ENCODE measurements at regions of chr12 and their contacts with region 1.

Region 1: DNA sequence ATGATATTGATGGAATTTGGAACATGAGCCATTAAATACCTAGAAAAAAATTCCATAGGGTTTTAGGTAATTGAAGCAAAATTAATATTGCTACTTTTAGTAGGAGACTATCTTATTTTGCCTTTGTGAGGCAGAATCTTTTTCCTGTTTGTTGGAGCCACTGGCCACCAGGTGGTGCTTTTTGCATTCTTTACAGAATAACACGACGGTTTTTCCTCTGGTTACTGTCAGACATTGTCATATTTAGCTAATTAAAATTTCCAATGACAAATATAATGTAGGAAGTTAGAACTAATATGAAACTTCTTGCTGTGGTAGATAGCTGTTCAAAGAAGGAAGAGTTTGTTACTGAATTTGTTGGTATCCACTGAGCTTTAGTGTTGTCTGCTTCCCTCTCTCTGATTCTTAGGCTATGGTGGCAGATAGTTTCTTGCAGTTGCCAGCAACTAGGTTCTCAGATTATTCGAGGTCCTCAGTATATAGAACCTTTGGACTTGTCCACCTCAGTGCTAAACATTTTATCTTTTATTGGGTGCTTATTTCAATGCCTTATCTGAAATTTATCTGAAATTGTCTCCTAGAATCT is 25.7 kb downstream of the RAB21 start:
- DNase-seq: peak; percentile 25 to 57 (median 40)
- H3K4me3 ChIP-seq: no peak overlapping the region
- H3K4me3 Mint-ChIP-seq: no peak overlapping the region
- H3K27ac ChIP-seq: no peak overlapping the region
- H3K27ac Mint-ChIP-seq: peak overlapping the region; percentile 17 to 84 (median 45)
- H3K4me1 ChIP-seq: no peaks in the 10 kb centered on the region
- H3K4me1 Mint-ChIP-seq: peaks cover 6 to 10% (median 8%) of the 10 kb centered on the region in 4 donors
- H3K27me3 ChIP-seq: no peaks in the 10 kb centered on the region
- H3K27me3 Mint-ChIP-seq: no peaks in the 10 kb centered on the region

Region 2: GRCh38 chr12:71795901-71796300 is 15.6 kb after region 1 on chr12:
- CTCF ChIA-PET with region 1: interaction called, 13 read pairs
- POLR2A ChIA-PET with region 1: no interaction called
- intact Hi-C with region 1: no loop called
- DNase-seq: no peak
- H3K4me3 ChIP-seq: no peak overlapping the region
- H3K4me3 Mint-ChIP-seq: no peak overlapping the region
- H3K27ac ChIP-seq: no peak overlapping the region
- H3K27ac Mint-ChIP-seq: peak overlapping the region in 1 of 7 donors; percentile 71
- H3K4me1 ChIP-seq: no peaks in the 10 kb centered on the region
- H3K4me1 Mint-ChIP-seq: peaks cover 0 to 1% (median 0%) of the 10 kb centered on the region in 4 donors
- H3K27me3 ChIP-seq: no peaks in the 10 kb centered on the region
- H3K27me3 Mint-ChIP-seq: no peaks in the 10 kb centered on the region

Region 3: GRCh38 chr12:71846322-71846940 is 66.1 kb after region 1 on chr12:
- CTCF ChIA-PET with region 1: interaction called, 33 read pairs
- POLR2A ChIA-PET with region 1: interaction called, 3 read pairs
- intact Hi-C with region 1: loop called (anchors 1 kb)
- DNase-seq: peak in 4 of 5 donors; percentile 31 to 45 (median 36)
- H3K4me3 ChIP-seq: no peak overlapping the region
- H3K4me3 Mint-ChIP-seq: no peak overlapping the region
- H3K27ac ChIP-seq: peak overlapping the region; percentile 11
- H3K27ac Mint-ChIP-seq: peak overlapping the region in 4 of 7 donors; percentile 1 to 76 (median 18)
- H3K4me1 ChIP-seq: peaks cover 34% of the 10 kb centered on the region
- H3K4me1 Mint-ChIP-seq: peaks cover 18 to 41% (median 28%) of the 10 kb centered on the region in 4 donors
- H3K27me3 ChIP-seq: no peaks in the 10 kb centered on the region
- H3K27me3 Mint-ChIP-seq: no peaks in the 10 kb centered on the region

Region 4: GRCh38 chr12:71900091-71900490 is 119.8 kb after region 1 on chr12:
- CTCF ChIA-PET with region 1: interaction called, 4 read pairs
- POLR2A ChIA-PET with region 1: no interaction called
- intact Hi-C with region 1: loop called (anchors 10 kb)
- DNase-seq: no peak
- H3K4me3 ChIP-seq: no peak overlapping the region
- H3K4me3 Mint-ChIP-seq: no peak overlapping the region
- H3K27ac ChIP-seq: no peak overlapping the region
- H3K27ac Mint-ChIP-seq: no peak overlapping the region
- H3K4me1 ChIP-seq: peaks cover 4% of the 10 kb centered on the region
- H3K4me1 Mint-ChIP-seq: peaks cover 0 to 16% (median 9%) of the 10 kb centered on the region in 4 donors
- H3K27me3 ChIP-seq: no peaks in the 10 kb centered on the region
- H3K27me3 Mint-ChIP-seq: no peaks in the 10 kb centered on the region

Region 5: GRCh38 chr12:72063073-72063472 is 282.7 kb after region 1 on chr12:
- CTCF ChIA-PET with region 1: no interaction called
- POLR2A ChIA-PET with region 1: no interaction called
- intact Hi-C with region 1: no loop called
- DNase-seq: no peak
- H3K4me3 ChIP-seq: no peak overlapping the region
- H3K4me3 Mint-ChIP-seq: no peak overlapping the region
- H3K27ac ChIP-seq: no peak overlapping the region
- H3K27ac Mint-ChIP-seq: no peak overlapping the region
- H3K4me1 ChIP-seq: no peaks in the 10 kb centered on the region
- H3K4me1 Mint-ChIP-seq: no peaks in the 10 kb centered on the region
- H3K27me3 ChIP-seq: no peaks in the 10 kb centered on the region
- H3K27me3 Mint-ChIP-seq: peaks cover 5 to 9% of the 10 kb centered on the region in 2 donors

Region 6: DNA sequence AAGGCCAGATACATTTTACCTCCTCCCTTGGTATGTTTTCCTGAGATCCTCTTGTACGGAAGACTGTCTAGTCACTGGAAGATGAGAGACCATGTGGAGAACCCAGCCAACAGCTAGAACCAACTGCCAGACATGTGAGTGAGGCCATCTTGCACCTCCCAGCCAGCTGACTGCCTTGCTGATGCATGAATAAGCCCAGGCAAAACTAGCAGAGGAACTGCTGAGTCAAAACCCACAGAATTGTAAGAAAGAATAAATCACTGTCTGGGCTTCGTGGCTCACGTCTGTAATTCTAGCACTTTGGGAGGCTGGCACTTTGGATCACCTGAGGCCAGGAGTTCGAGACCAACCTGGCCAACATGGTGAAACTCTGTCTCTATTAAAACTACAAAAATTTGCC is 318.3 kb after region 1 on chr12:
- CTCF ChIA-PET with region 1: no interaction called
- POLR2A ChIA-PET with region 1: no interaction called
- intact Hi-C with region 1: no loop called
- DNase-seq: no peak
- H3K4me3 ChIP-seq: no peak overlapping the region
- H3K4me3 Mint-ChIP-seq: no peak overlapping the region
- H3K27ac ChIP-seq: no peak overlapping the region
- H3K27ac Mint-ChIP-seq: no peak overlapping the region
- H3K4me1 ChIP-seq: no peaks in the 10 kb centered on the region
- H3K4me1 Mint-ChIP-seq: no peaks in the 10 kb centered on the region
- H3K27me3 ChIP-seq: no peaks in the 10 kb centered on the region
- H3K27me3 Mint-ChIP-seq: peaks cover 0 to 1% of the 10 kb centered on the region in 2 donors